GM12878 (cell line): ENCODE measurements at regions of chr3 and their contacts with region 1.

Region 1: DNA sequence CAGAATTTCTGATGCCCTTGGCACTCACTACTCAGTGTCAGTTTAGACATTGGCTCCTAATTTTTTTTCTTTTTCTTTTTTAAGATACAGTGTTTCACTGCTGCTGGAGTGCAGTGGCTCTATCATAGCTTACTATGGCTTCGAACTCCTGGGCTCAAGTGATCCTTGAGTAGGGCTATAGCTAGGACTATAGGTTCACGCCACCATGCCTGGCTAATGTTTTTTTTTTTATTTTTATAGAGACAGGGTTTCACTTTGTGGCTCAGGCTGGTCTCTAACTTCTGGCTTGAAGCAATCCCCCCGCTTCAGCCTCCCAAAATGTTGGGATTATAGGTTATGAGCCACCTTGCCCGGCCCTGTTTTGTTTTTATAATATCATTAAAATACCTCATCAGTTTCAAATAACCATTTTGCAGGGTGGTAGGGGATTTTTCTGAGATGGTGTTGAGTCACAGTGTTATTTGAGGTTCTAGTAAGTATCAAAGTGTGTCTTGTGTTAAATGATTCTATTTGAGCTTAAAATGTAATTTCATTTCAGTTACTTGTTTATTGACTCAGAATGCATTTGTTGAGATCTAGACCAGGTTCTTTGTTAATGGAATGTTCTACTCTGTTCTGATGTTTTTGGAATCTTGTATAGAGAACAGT is 7.0 kb downstream of the FNDC3B start:
- DNase-seq: no peak
- ATAC-seq: peak; percentile 64
- H3K4me3 ChIP-seq: no peak overlapping the region; the same call in 1 of the 2 replicates
- H3K27ac ChIP-seq: peak overlapping the region; percentile 18; the same call in 1 of the 2 replicates
- H3K4me1 ChIP-seq: no peaks in the 10 kb centered on the region
- H3K27me3 ChIP-seq: no peaks in the 10 kb centered on the region
- CTCF ChIP-seq: no peak
- EP300 ChIP-seq: no peak
- POLR2A ChIP-seq: no peak
- RAD21 ChIP-seq: no peak

Region 2: DNA sequence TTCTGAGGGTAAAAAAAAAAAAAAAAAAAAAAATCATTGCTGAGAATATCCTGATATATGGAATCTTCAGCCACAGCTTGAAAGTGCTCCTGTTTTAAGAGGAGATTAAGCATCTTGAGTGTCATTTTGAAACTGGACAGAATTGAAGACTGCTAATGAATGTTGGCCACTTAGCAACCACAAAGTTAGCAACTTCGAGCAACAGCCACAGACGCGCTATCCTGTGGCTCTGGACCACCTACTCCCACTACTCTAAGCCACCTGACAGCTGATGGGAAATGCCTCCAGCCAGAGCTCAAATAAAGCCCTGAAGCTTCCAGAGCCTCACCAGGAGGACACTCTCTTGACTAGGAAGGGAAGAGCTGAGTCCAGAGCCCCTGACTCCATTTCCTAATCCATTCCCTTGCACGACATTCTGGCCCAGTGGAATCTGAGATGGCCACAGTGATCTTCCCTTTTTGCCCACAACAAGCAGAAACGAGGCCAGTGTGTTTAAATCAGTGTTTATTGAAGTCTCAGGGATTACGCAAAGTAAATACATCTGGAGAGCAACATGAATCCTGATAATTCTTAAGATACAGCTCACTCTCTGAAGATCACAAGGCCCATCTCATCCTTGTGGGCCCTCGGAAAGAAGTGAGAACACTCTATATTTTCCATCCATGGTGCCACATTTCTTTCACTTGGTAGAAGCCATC is 144.6 kb before region 1 on chr3:
- CTCF ChIA-PET with region 1: no interaction called
- POLR2A ChIA-PET with region 1: no interaction called
- RAD21 ChIA-PET with region 1: no interaction called
- SMC1A ChIA-PET with region 1: no interaction called
- in situ Hi-C with region 1: no loop called
- intact Hi-C with region 1: no loop called
- DNase-seq: no peak
- ATAC-seq: no peak
- H3K4me3 ChIP-seq: no peak overlapping the region
- H3K27ac ChIP-seq: no peak overlapping the region
- H3K4me1 ChIP-seq: no peaks in the 10 kb centered on the region
- H3K27me3 ChIP-seq: no peaks in the 10 kb centered on the region
- CTCF ChIP-seq: no peak
- EP300 ChIP-seq: no peak
- POLR2A ChIP-seq: no peak
- RAD21 ChIP-seq: no peak

Region 3: DNA sequence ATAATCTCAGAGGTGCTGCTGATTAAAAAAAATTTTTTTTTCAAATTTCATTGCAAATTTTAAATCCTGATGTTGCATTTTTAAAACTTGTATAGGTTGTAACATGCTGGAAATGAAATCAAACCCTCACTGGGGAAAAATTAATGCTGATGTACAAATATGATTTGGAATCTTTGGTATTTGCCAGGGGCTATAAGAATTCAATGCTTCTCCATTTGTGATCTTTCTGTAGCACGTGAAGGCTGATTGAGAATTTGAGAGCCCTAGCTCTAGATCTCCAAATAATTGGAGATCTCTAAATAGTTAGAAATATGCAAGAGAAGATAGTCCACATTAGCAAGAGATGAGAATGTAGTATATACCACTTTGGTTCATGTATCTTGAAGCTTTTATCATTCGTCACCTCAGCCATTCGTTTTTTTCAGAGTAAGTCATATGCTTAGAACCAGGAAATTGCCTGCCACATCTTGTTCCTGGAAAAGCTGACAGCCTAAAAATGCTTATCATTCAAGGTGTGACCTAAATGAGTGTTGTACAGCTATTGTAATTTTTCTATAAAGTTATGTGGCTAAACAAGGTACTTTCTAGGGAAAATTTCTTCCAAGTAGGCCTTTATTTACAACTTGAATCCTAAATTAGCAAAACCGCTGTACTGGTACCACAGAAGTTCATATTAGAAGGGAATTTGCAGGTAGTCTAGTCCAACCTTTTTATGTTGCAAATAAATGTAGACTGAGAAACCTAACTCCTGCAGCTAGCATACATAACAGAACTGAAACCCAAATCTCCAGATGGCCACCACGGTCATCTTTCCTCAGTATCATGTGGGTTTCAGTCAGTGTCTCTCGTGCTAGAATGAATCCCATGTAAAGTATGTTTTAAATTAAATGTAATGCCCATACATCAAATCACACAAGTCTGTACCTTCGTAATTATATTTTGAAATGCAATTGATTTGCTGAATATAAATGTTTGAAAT is 41.5 kb after region 1 on chr3:
- CTCF ChIA-PET with region 1: interaction called, 3 read pairs
- POLR2A ChIA-PET with region 1: no interaction called
- RAD21 ChIA-PET with region 1: interaction called, 11 read pairs
- SMC1A ChIA-PET with region 1: interaction called, 7 read pairs
- in situ Hi-C with region 1: no loop called
- intact Hi-C with region 1: no loop called
- DNase-seq: peak; percentile 45
- ATAC-seq: peak; percentile 87
- H3K4me3 ChIP-seq: no peak overlapping the region
- H3K27ac ChIP-seq: no peak overlapping the region
- H3K4me1 ChIP-seq: peaks cover 17% of the 10 kb centered on the region
- H3K27me3 ChIP-seq: no peaks in the 10 kb centered on the region
- CTCF ChIP-seq: no peak
- EP300 ChIP-seq: peak in 1 of 2 experiments; percentile 47; a peak in 2 of 4 replicates
- POLR2A ChIP-seq: no peak
- RAD21 ChIP-seq: no peak